ENCODE measurements at regions of chr7 and their contacts with region 1.

Region 1: GRCh38 chr7:5694912-5695726 is 86.3 kb downstream of the RNF216 start:
- DNase-seq: peak; percentile 79 to 89
- ATAC-seq: peak; percentile 71
- H3K4me3 ChIP-seq: peak overlapping the region; percentile 40 to 44
- H3K27ac ChIP-seq: peak overlapping the region; percentile 99 to 100
- H3K4me1 ChIP-seq: peaks cover 5% of the 10 kb centered on the region in 2 donors
- H3K27me3 ChIP-seq: no peaks in the 10 kb centered on the region

Region 2: GRCh38 chr7:5423844-5424688 is 271.1 kb before region 1 on chr7:
- intact Hi-C with region 1: loop called in 1 of 2 experiments (anchors 5 kb)
- DNase-seq: peak; percentile 96
- ATAC-seq: peak; percentile 51
- H3K4me3 ChIP-seq: peak overlapping the region; percentile 70 to 99
- H3K27ac ChIP-seq: peak overlapping the region; percentile 94 to 95
- H3K4me1 ChIP-seq: no peaks in the 10 kb centered on the region
- H3K27me3 ChIP-seq: no peaks in the 10 kb centered on the region